PC-9 (cell line): ENCODE measurements at regions of chr3 and their contacts with region 1.

Region 1: DNA sequence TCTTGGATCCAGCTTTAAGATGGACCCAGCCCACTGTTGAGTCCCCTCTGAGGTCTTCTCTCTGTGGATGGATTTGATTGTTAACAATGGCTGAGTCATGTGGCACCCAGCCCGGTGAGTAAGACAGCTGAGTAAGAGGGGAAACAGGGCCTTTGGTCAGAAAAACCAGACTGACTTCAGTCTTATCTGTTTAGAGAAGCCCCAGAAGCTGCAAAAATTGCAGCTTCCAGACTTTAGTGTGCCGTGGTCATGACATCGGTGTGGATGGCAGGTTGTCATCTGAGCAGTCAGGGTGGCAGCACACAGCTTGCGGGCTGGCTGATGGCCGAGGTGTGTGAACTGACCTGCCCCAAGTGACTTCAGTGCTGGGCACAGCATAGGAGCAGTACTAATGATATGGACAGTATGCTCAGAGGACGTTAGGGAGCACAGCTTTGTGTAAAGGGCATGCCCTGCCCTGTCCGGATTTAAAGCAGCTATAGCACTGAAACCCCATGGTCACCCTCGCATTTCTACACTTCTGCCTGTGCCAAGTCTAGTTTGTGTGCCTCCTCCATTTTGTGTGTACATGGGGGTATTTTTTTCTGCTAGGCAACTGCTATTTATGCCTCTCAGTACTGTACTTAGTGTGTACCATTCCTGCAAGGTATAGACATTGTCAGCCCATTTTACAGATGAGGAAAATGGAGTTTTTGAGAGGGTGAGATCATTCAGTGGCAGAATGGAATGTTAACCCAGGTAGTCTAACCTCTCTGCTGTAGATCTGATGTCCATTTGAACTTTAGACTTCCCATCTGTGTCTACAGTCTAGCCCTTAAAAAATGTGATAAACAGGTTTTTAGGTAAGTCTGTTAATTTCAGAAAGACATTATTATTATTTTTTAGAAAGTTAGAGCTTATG is 44.4 kb downstream of the FLNB start:
- DNase-seq: peak; percentile 83 to 92
- H3K4me3 ChIP-seq: peak overlapping the region; percentile 33; the same call in 1 of the 2 replicates
- H3K27ac ChIP-seq: peak overlapping the region; percentile 99
- H3K4me1 ChIP-seq: peaks cover 75% of the 10 kb centered on the region
- H3K27me3 ChIP-seq: no peaks in the 10 kb centered on the region
- CTCF ChIP-seq: no peak

Region 2: GRCh38 chr3:57840473-57840872 is 212.2 kb before region 1 on chr3:
- CTCF ChIA-PET with region 1: no interaction called
- POLR2A ChIA-PET with region 1: no interaction called
- intact Hi-C with region 1: no loop called
- DNase-seq: no peak
- H3K4me3 ChIP-seq: no peak overlapping the region
- H3K27ac ChIP-seq: peak overlapping the region; percentile 50
- H3K4me1 ChIP-seq: no peaks in the 10 kb centered on the region
- H3K27me3 ChIP-seq: no peaks in the 10 kb centered on the region
- CTCF ChIP-seq: no peak

Region 3: GRCh38 chr3:57968501-57968900 is 84.1 kb before region 1 on chr3:
- CTCF ChIA-PET with region 1: interaction called, 3 read pairs
- POLR2A ChIA-PET with region 1: interaction called, 14 read pairs
- intact Hi-C with region 1: loop called (anchors 2 kb)
- DNase-seq: no peak
- H3K4me3 ChIP-seq: no peak overlapping the region
- H3K27ac ChIP-seq: peak overlapping the region; percentile 30; the same call in 1 of the 2 replicates
- H3K4me1 ChIP-seq: peaks cover 51% of the 10 kb centered on the region
- H3K27me3 ChIP-seq: no peaks in the 10 kb centered on the region
- CTCF ChIP-seq: no peak

Region 4: GRCh38 chr3:58008140-58009025 is 44.2 kb before region 1 on chr3 and contains the start of gene FLNB:
- CTCF ChIA-PET with region 1: interaction called, 9 read pairs
- POLR2A ChIA-PET with region 1: interaction called, 5 read pairs
- intact Hi-C with region 1: loop called (anchors 2 kb)
- DNase-seq: peak; percentile 38 to 71
- H3K4me3 ChIP-seq: peak within 1 kb of the TSS; percentile 100
- H3K27ac ChIP-seq: peak within 1 kb of the TSS; percentile 69
- H3K4me1 ChIP-seq: peaks cover 53% of the 10 kb centered on the region
- H3K27me3 ChIP-seq: no peaks in the 10 kb centered on the region
- CTCF ChIP-seq: peak; percentile 74
- total RNA-seq, gene FLNB: 349 and 361 TPM in 2 replicates

Region 5: GRCh38 chr3:58038675-58039292 is 13.8 kb before region 1 on chr3:
- CTCF ChIA-PET with region 1: no interaction called
- POLR2A ChIA-PET with region 1: no interaction called
- intact Hi-C with region 1: loop called (anchors 2 kb)
- DNase-seq: no peak
- H3K4me3 ChIP-seq: no peak overlapping the region
- H3K27ac ChIP-seq: no peak overlapping the region
- H3K4me1 ChIP-seq: peaks cover 78% of the 10 kb centered on the region
- H3K27me3 ChIP-seq: no peaks in the 10 kb centered on the region
- CTCF ChIP-seq: no peak

Region 6: DNA sequence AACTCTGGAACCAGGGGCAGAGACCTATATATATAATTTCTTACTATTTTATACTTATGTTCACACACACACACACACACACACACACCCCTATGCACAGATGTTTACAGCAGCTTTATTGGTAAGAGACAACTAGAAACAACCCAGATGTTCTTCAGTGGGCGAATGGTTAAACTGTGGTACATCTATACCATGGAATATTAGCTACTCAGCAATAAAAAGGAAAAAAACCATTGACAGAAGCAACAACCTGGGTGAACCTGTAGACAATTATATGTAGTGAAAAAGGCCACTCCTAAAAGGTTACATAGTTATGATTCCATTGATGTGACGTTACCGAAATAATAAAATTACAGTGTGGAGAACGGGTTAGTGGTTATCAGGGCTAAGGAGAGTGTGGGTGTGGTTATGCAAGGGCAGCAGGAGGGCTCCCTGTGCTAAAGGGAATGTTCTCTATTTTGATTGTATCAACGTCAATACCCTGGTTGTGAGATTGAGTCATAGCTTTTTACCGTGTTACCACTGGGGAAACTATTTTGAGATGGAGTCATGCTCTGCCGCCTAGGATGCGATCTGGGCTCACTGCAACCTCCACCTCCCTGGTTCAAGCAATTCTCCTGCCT is 41.1 kb after region 1 on chr3:
- CTCF ChIA-PET with region 1: no interaction called
- POLR2A ChIA-PET with region 1: no interaction called
- intact Hi-C with region 1: loop called (anchors 2 kb)
- DNase-seq: peak; percentile 67 to 94
- H3K4me3 ChIP-seq: no peak overlapping the region
- H3K27ac ChIP-seq: peak overlapping the region; percentile 62
- H3K4me1 ChIP-seq: peaks cover 7% of the 10 kb centered on the region; the same call in 1 of the 2 replicates
- H3K27me3 ChIP-seq: no peaks in the 10 kb centered on the region
- CTCF ChIP-seq: no peak

Region 7: GRCh38 chr3:59386165-59386564 is 1333.5 kb after region 1 on chr3:
- CTCF ChIA-PET with region 1: no interaction called
- POLR2A ChIA-PET with region 1: no interaction called
- intact Hi-C with region 1: no loop called
- DNase-seq: no peak
- H3K4me3 ChIP-seq: no peak overlapping the region
- H3K27ac ChIP-seq: no peak overlapping the region
- H3K4me1 ChIP-seq: no peaks in the 10 kb centered on the region
- H3K27me3 ChIP-seq: no peaks in the 10 kb centered on the region
- CTCF ChIP-seq: no peak